Upper lobe of right lung (tissue), 1 donor: ENCODE measurements at regions of chr21 and their contacts with region 1.

Region 1: GRCh38 chr21:31866077-31866511 is 6.7 kb upstream of the HUNK start:
- DNase-seq: peak; percentile 95
- ATAC-seq: peak; percentile 91
- H3K4me3 ChIP-seq: no peak overlapping the region
- H3K27ac ChIP-seq: no peak overlapping the region
- H3K4me1 ChIP-seq: no peaks in the 10 kb centered on the region
- H3K27me3 ChIP-seq: peaks cover 2% of the 10 kb centered on the region
- CTCF ChIP-seq: peak; percentile 88

Region 2: GRCh38 chr21:32184485-32184884 is 318.4 kb after region 1 on chr21:
- intact Hi-C with region 1: no loop called
- DNase-seq: no peak
- ATAC-seq: no peak
- H3K4me3 ChIP-seq: no peak overlapping the region
- H3K27ac ChIP-seq: no peak overlapping the region
- H3K4me1 ChIP-seq: no peaks in the 10 kb centered on the region
- H3K27me3 ChIP-seq: no peaks in the 10 kb centered on the region
- CTCF ChIP-seq: no peak

Region 3: GRCh38 chr21:32257962-32258785 is 392.1 kb after region 1 on chr21:
- intact Hi-C with region 1: loop called (anchors 5 kb)
- DNase-seq: no peak
- ATAC-seq: peak; percentile 92
- H3K4me3 ChIP-seq: no peak overlapping the region
- H3K27ac ChIP-seq: no peak overlapping the region
- H3K4me1 ChIP-seq: peaks cover 4% of the 10 kb centered on the region
- H3K27me3 ChIP-seq: no peaks in the 10 kb centered on the region
- CTCF ChIP-seq: peak; percentile 72